B cell (primary cell): ENCODE measurements at regions of chr12 and their contacts with region 1.

Region 1: DNA sequence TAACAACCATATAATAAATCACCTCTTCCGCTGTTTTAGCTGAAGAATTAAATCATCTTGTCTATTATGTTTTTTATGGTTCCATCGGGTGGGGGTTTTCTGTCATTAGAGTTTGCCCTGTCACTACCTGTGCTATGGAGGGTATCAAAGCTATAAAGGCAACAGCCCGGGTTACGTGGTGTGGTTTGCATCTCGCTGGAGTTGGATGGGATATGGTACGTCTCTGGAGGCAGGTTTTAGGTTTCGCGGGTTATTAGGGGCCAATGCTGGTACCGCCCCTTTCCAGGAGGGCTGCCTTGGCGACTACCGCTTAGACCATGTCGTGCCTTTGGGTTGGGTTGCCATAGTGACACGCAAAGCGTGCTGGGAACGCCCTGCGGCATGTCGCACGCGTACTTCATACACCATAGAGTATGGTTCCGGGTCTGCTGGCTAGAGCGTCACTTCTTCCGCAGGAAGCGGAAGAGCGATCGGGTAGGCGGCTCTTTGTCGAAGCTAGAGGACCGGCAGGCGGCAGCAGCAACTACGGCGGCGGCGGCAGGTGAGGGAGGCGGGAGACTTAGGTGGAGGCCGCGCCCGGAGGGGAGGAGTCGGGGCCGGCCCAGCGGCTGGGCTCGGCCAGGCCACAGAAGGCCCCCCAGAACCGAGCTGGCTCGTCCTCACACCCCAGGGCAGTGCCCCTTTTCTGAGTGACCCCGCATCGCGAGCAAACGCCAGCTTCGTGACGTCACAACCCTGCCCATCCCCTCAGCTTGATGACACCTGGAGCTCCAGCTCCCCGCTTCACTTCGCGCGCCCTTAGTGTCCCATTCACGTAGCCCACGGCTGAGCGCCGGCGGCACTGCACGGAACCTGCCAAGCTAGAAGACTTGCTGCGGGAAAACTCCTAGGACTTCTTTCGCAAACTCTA is at the start of gene ZC3H10:
- DNase-seq: peak; percentile 99
- ATAC-seq: peak; percentile 76
- H3K4me3 ChIP-seq: peak within 1 kb of the TSS; percentile 66 to 99 (median 97)
- H3K4me3 Mint-ChIP-seq: peak within 1 kb of the TSS; percentile 99
- H3K27ac ChIP-seq: peak within 1 kb of the TSS; percentile 94 to 95
- H3K27ac Mint-ChIP-seq: peak within 1 kb of the TSS; percentile 99
- H3K4me1 ChIP-seq: peaks cover 17 to 30% of the 10 kb centered on the region in 2 donors
- H3K4me1 Mint-ChIP-seq: peaks cover 36% of the 10 kb centered on the region
- H3K27me3 ChIP-seq: no peaks in the 10 kb centered on the region
- H3K27me3 Mint-ChIP-seq: no peaks in the 10 kb centered on the region
- CTCF ChIP-seq: peak; percentile 61
- total RNA-seq, gene ZC3H10: 21.7 and 25.5 TPM in 2 replicates

Region 2: DNA sequence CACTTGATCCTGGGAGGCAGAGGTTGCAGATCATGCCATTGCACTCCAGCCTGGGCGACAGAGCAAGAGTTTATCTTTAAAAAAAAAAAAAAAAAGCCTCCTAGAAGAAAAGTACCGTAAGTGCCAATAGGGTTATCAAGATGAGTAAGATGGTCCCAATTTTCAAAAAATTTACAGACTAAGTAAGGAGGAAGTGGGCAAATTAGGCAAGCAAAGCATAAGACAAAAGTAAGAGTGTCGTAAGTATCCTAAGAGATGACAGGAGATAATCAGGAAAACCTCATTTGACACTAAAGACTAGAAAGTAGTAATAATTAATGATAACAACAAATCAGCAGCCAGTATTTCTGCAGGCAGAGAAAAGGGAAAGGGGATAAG is 202.6 kb before region 1 on chr12:
- CTCF ChIA-PET with region 1: no interaction called
- POLR2A ChIA-PET with region 1: no interaction called
- intact Hi-C with region 1: no loop called
- DNase-seq: no peak
- ATAC-seq: no peak
- H3K4me3 ChIP-seq: no peak overlapping the region
- H3K4me3 Mint-ChIP-seq: no peak overlapping the region
- H3K27ac ChIP-seq: no peak overlapping the region
- H3K27ac Mint-ChIP-seq: no peak overlapping the region
- H3K4me1 ChIP-seq: no peaks in the 10 kb centered on the region
- H3K4me1 Mint-ChIP-seq: peaks cover 17% of the 10 kb centered on the region
- H3K27me3 ChIP-seq: no peaks in the 10 kb centered on the region
- H3K27me3 Mint-ChIP-seq: no peaks in the 10 kb centered on the region
- CTCF ChIP-seq: no peak

Region 3: DNA sequence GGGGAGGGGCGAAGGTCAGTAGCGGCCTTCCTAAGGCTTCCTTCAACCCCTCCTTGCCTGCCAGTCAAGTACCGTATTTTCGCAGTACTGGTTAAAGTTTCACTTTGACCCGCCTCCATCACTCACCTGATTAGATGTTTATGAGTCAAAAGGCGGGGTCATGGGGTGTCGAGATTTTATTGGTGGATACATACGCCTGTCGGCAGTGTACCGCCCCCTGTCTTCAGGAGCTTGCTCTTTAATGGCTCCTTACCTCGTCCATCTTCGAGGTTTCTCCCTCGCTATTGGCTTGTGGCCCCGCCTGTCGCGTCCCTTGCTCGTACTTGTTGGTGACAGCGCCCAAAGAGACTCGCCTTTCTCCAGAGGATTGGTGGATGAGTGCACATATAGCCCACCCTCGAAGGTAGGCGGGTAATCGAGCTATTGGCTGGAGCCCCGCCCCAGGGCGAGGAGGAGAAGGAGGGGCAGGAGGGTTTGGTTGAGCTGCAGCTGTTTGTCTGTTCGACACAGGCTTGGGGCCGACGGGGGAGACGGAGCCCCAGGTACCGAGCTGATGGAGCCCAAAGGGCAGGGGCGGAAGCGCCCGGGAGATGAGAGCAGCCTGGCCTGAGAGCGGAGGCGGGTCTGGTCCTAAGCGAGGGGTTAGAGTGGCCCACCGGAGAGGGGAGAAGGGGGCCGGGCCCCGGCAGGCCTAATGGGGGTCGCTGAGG is 144.3 kb before region 1 on chr12 and contains the start of gene RAB5B:
- CTCF ChIA-PET with region 1: interaction called, 4 read pairs
- POLR2A ChIA-PET with region 1: no interaction called
- intact Hi-C with region 1: loop called (anchors 1 kb)
- DNase-seq: peak; percentile 99
- ATAC-seq: peak; percentile 87
- H3K4me3 ChIP-seq: peak within 1 kb of the TSS; percentile 77 to 99 (median 90)
- H3K4me3 Mint-ChIP-seq: no peak within 1 kb of the TSS
- H3K27ac ChIP-seq: peak within 1 kb of the TSS; percentile 85 to 96
- H3K27ac Mint-ChIP-seq: no peak within 1 kb of the TSS
- H3K4me1 ChIP-seq: peaks cover 17% of the 10 kb centered on the region in 2 donors
- H3K4me1 Mint-ChIP-seq: peaks cover 13% of the 10 kb centered on the region
- H3K27me3 ChIP-seq: no peaks in the 10 kb centered on the region
- H3K27me3 Mint-ChIP-seq: no peaks in the 10 kb centered on the region
- CTCF ChIP-seq: no peak
- total RNA-seq, gene RAB5B: 96.1 and 111 TPM in 2 replicates

Region 4: DNA sequence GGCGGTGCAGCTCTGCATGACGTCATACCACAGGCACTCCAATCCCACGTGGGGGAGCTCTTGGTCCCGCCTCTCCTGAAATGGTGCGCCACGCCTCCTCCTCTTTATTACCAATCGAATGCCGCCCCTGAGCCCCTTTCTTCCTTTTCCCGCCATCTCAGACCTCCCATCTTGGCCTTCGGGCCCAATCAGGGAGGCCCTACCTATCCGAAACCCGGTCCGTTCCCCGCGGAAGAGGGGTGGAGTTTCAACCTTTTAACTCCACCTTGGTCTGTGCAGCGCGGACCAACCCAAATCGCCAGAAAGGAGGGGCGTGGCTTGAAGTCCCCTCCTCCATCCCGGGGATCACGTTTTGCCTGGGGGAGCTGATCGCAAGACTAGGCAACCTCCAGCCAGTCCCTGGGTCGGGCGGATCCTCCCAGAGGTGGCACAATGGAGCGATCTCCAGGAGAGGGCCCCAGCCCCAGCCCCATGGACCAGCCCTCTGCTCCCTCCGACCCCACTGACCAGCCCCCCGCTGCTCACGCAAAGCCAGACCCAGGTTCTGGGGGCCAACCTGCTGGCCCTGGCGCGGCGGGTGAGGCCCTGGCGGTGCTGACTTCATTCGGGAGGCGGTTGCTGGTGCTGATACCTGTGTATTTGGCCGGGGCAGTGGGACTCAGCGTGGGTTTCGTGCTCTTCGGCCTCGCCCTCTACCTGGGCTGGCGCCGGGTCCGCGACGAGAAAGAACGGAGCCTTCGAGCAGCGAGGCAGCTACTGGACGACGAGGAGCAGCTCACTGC is 10.0 kb after region 1 on chr12 and contains the start of gene ESYT1:
- CTCF ChIA-PET with region 1: interaction called, 39 read pairs
- POLR2A ChIA-PET with region 1: interaction called, 49 read pairs
- intact Hi-C with region 1: loop called (anchors 1 kb)
- DNase-seq: peak; percentile 99
- ATAC-seq: peak; percentile 85
- H3K4me3 ChIP-seq: peak within 1 kb of the TSS; percentile 88 to 95 (median 92)
- H3K4me3 Mint-ChIP-seq: peak within 1 kb of the TSS; percentile 100
- H3K27ac ChIP-seq: peak within 1 kb of the TSS; percentile 76 to 80
- H3K27ac Mint-ChIP-seq: peak within 1 kb of the TSS; percentile 98
- H3K4me1 ChIP-seq: peaks cover 46 to 54% of the 10 kb centered on the region in 2 donors
- H3K4me1 Mint-ChIP-seq: peaks cover 68% of the 10 kb centered on the region
- H3K27me3 ChIP-seq: no peaks in the 10 kb centered on the region
- H3K27me3 Mint-ChIP-seq: no peaks in the 10 kb centered on the region
- CTCF ChIP-seq: no peak
- total RNA-seq, gene ESYT1: 151 and 154 TPM in 2 replicates

Region 5: GRCh38 chr12:56258057-56258819 is 140.2 kb after region 1 on chr12 and contains the start of gene ANKRD52:
- CTCF ChIA-PET with region 1: interaction called, 5 read pairs
- POLR2A ChIA-PET with region 1: interaction called, 6 read pairs
- intact Hi-C with region 1: loop called (anchors 1 kb)
- DNase-seq: peak; percentile 93
- ATAC-seq: peak; percentile 95
- H3K4me3 ChIP-seq: peak within 1 kb of the TSS; percentile 32 to 99 (median 77)
- H3K4me3 Mint-ChIP-seq: peak within 1 kb of the TSS; percentile 90
- H3K27ac ChIP-seq: peak within 1 kb of the TSS; percentile 60 to 81
- H3K27ac Mint-ChIP-seq: peak within 1 kb of the TSS; percentile 92
- H3K4me1 ChIP-seq: peaks cover 16 to 21% of the 10 kb centered on the region in 2 donors
- H3K4me1 Mint-ChIP-seq: peaks cover 18% of the 10 kb centered on the region
- H3K27me3 ChIP-seq: no peaks in the 10 kb centered on the region
- H3K27me3 Mint-ChIP-seq: no peaks in the 10 kb centered on the region
- CTCF ChIP-seq: peak; percentile 78
- total RNA-seq, gene ANKRD52: 46.5 and 54.6 TPM in 2 replicates

Region 6: DNA sequence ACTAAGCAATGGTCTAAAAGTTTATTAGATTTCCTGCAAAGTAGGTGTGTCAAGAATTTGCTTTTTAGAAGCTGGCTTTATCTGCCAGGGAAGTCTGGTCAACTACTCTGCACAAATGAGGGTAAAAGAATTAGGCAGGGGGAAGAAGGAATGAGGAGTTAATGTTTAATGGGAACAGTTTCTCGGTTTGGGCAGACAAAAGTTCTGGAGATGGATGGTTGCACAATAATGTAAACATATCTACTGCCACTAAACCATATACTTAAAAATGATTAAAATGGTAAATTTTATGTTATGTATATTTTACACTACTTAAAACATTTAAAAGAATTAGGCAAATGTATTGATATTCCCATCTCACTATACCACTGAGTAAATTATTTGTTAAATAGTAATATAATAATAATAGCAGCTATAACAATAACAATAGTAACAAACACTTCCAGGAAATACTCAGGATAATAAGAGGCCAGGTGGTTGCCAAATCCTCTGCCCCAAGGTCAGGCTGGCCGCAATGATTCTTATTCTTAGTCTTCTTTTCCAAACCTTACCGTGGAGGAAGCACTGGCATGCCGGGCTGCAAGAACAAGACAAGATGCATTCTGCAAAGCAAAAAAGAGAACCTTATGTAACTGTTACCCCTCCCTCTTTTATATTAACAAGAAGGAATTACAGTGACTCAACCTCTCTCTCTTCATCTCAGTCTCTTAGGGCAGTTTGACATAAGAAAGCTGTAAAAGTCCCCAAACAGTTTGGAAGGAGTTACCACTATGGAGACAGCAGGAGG is 168.2 kb after region 1 on chr12:
- CTCF ChIA-PET with region 1: no interaction called
- POLR2A ChIA-PET with region 1: no interaction called
- intact Hi-C with region 1: no loop called
- DNase-seq: no peak
- ATAC-seq: no peak
- H3K4me3 ChIP-seq: no peak overlapping the region
- H3K4me3 Mint-ChIP-seq: no peak overlapping the region
- H3K27ac ChIP-seq: no peak overlapping the region
- H3K27ac Mint-ChIP-seq: no peak overlapping the region
- H3K4me1 ChIP-seq: peaks cover 0 to 5% of the 10 kb centered on the region in 2 donors
- H3K4me1 Mint-ChIP-seq: peaks cover 10% of the 10 kb centered on the region
- H3K27me3 ChIP-seq: no peaks in the 10 kb centered on the region
- H3K27me3 Mint-ChIP-seq: no peaks in the 10 kb centered on the region
- CTCF ChIP-seq: no peak

Region 7: DNA sequence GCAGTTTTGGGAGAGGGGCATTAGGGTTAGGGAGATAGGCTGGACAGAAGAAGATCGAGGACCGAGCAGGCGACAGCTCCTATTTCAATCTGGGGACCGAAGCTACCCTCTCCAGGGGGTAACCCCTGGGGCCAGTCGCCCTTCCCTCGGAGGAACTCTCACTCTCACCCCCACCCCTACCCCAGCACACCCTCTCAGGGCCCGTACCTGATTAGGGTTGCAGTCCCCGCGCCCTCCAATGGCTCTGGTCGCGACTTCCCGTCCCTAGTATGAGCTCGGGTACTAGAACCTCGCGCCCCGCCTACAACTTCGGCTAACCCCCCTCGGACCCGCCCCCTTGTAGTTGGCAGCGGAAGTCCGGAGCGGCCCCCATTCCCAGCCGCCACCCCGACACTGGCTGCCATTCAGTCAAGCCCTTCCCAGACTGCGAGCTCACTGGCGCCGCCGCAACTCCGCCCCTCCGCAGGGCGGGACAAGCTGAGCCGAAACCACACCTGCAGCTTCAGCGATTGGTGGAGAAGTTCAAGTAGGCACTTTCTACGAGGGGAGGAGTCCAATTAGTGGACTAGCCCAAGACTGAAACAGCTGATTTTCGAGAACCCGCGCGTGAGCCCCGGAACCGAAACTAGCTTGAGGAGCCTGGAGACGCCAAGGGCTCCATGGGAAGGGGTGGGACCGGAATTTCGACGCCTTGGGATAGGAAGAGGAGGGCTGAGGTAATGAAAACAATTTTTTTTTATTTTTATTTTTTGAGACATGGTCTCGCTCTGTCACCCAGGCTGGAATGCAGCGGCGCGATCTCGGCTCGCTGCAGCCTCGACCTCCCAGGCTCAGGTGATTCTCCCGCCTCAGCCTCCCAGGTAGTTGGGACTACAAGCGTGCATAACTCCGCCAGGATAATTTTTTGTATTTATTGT is 242.1 kb after region 1 on chr12 and contains the start of gene STAT2:
- CTCF ChIA-PET with region 1: interaction called, 6 read pairs
- POLR2A ChIA-PET with region 1: interaction called, 7 read pairs
- intact Hi-C with region 1: loop called (anchors 1 kb)
- DNase-seq: peak; percentile 99
- ATAC-seq: peak; percentile 93
- H3K4me3 ChIP-seq: peak within 1 kb of the TSS; percentile 55 to 97 (median 76)
- H3K4me3 Mint-ChIP-seq: peak within 1 kb of the TSS; percentile 89
- H3K27ac ChIP-seq: peak within 1 kb of the TSS; percentile 37 to 72
- H3K27ac Mint-ChIP-seq: peak within 1 kb of the TSS; percentile 92
- H3K4me1 ChIP-seq: peaks cover 15 to 24% of the 10 kb centered on the region in 2 donors
- H3K4me1 Mint-ChIP-seq: peaks cover 29% of the 10 kb centered on the region
- H3K27me3 ChIP-seq: no peaks in the 10 kb centered on the region
- H3K27me3 Mint-ChIP-seq: no peaks in the 10 kb centered on the region
- CTCF ChIP-seq: no peak
- total RNA-seq, gene STAT2: 298 and 309 TPM in 2 replicates

Region 8: DNA sequence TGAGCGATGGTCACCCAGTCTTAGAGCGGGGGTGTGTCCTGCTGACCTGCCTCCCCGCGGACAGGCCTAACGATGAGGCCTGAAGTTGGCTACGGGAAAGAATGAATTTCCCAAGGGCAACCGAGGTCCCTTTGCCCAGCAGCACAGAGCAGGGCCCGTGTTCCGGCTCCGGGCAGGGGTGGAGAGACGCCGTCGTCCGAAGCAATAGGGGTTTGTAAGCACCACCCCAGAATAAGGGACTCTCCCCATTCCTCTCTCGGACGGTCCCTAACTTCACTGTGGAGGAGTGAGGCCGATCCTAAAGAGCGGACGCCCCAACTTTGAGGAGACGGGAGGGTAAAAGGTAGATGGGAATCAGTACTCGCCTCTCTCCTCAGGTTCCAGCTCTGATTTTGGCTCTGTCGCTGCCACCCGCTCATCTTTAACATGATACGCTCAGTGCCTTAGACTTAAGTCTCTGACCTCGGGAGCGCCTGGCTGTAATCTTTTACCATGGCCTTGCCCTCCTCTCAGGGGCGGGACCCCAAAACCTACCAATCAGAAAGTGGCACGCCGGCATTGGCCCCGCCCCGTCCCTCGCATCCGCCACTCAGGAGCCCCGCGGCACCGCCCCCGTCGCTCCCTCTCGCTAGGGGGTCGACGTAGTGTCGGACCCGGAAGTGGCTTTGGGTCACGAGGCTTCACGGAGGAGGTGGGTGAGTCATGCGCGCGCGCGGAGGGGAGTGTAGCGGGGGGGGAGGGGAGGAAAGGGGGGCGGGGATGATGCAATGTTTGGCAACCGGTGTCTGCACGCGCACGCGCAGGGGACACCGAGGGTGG is 1402.2 kb after region 1 on chr12 and contains the start of gene DDIT3:
- CTCF ChIA-PET with region 1: no interaction called
- POLR2A ChIA-PET with region 1: no interaction called
- intact Hi-C with region 1: loop called (anchors 2 kb)
- DNase-seq: peak; percentile 100
- ATAC-seq: peak; percentile 75
- H3K4me3 ChIP-seq: peak within 1 kb of the TSS; percentile 97 to 100 (median 98)
- H3K4me3 Mint-ChIP-seq: peak within 1 kb of the TSS; percentile 99
- H3K27ac ChIP-seq: peak within 1 kb of the TSS; percentile 98 to 100
- H3K27ac Mint-ChIP-seq: peak within 1 kb of the TSS; percentile 100
- H3K4me1 ChIP-seq: peaks cover 42 to 53% of the 10 kb centered on the region in 2 donors
- H3K4me1 Mint-ChIP-seq: peaks cover 57% of the 10 kb centered on the region
- H3K27me3 ChIP-seq: no peaks in the 10 kb centered on the region
- H3K27me3 Mint-ChIP-seq: no peaks in the 10 kb centered on the region
- CTCF ChIP-seq: no peak
- total RNA-seq, gene DDIT3: 35.6 and 39.5 TPM in 2 replicates